ENCODE measurements at regions of chrX and their contacts with region 1.

Region 1: DNA sequence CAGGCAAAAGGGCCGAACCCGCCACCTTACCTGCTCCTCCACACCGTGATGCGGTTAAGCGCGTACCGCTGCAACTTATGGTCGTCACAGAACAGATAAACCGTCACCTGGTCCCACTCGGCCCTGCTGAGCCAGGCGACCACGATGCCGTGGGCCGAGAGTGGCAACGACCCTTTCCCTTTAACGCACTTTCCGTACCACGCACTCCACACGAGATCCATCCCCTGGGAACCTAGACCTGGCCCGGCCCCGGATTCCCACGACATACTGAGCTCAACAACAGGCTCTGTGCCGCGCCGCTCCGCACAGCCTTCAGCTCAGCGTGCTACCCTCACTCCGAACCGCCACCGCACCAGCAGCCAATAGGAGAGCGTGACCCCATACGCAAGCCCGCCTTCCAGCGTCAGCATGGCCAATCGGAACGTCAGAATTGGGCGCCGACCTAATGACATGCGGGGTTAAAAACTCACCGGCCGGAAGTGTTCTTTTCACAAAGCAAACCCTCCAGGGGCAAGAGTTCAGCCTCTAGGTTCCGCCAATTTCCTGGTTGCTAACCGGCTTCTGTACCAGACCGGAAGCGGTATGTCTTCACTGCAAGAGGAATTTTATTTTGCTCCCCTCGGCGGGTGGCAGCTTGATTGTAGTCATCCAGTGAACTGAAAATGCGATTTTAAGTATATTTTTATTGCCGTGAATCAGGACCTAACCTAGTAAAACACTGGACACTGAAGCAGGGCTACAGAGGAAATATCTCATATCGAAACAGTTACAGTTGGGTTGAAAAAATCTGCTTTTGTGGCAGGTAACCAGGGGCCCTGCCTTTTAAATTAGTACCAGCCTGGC is at the start of gene LAS1L:
- DNase-seq: peak; percentile 90
- H3K4me3 Mint-ChIP-seq: peak within 1 kb of the TSS; percentile 100
- H3K27ac Mint-ChIP-seq: peak within 1 kb of the TSS; percentile 99
- H3K4me1 Mint-ChIP-seq: peaks cover 11% of the 10 kb centered on the region
- H3K27me3 Mint-ChIP-seq: no peaks in the 10 kb centered on the region
- total RNA-seq, gene LAS1L: 54.0 and 55.9 TPM in 2 replicates

Region 2: GRCh38 chrX:64975989-64976672 is 558.5 kb before region 1 on chrX and contains the start of gene ZC4H2:
- intact Hi-C with region 1: loop called (anchors 10 kb)
- DNase-seq: peak; percentile 54
- H3K4me3 Mint-ChIP-seq: peak within 1 kb of the TSS; percentile 93
- H3K27ac Mint-ChIP-seq: peak within 1 kb of the TSS; percentile 61
- H3K4me1 Mint-ChIP-seq: peaks cover 20% of the 10 kb centered on the region
- H3K27me3 Mint-ChIP-seq: no peaks in the 10 kb centered on the region
- total RNA-seq, gene ZC4H2: 8.9 and 9.3 TPM in 2 replicates

Region 3: DNA sequence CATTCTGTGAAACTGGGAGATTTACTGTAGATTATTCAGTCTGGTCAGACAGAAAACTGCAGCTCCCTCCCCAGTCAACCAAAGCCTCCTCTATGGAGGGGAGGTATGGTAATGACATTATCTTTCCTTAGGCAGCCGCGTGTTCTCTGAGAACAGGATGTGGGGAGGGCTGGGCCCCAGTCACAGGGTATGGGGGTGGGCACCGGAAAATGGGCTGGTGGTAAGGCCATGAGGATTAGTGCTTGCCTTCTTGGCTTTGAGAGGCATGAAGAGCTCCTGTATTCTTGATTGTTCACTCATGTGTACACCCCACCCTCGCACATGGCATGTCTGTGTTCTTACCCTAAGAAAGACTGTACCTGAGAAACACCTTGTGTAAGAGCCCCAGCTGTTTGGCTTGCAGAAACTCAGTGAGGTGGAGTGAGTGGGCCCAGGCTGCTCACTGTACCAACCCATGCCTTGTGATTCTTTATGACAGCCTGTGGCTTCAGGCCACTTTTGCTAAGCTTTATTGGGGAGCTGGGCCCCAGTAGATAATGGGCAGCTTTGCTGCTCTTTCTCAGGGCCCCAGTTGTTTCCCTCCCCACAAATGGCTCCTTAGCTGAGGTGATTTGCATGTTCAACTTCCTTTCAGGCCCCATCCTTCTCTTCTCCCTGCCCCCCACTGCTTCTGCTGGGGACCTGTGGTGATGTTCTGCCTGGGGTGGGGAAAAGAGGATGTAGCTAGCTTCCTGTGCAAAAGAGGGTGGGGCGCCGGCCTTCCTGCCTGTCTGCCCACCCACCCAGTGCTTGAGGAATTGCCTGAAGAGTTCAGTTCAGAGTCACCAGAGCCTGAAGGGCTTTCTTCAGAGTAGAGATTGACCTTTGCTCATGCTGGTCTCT is 163.5 kb after region 1 on chrX:
- intact Hi-C with region 1: no loop called
- DNase-seq: peak; percentile 64
- H3K4me3 Mint-ChIP-seq: peak overlapping the region; percentile 45
- H3K27ac Mint-ChIP-seq: peak overlapping the region; percentile 94
- H3K4me1 Mint-ChIP-seq: peaks cover 71% of the 10 kb centered on the region
- H3K27me3 Mint-ChIP-seq: no peaks in the 10 kb centered on the region